PC-9 (cell line): ENCODE measurements at regions of chr11 and their contacts with region 1.

Region 1: DNA sequence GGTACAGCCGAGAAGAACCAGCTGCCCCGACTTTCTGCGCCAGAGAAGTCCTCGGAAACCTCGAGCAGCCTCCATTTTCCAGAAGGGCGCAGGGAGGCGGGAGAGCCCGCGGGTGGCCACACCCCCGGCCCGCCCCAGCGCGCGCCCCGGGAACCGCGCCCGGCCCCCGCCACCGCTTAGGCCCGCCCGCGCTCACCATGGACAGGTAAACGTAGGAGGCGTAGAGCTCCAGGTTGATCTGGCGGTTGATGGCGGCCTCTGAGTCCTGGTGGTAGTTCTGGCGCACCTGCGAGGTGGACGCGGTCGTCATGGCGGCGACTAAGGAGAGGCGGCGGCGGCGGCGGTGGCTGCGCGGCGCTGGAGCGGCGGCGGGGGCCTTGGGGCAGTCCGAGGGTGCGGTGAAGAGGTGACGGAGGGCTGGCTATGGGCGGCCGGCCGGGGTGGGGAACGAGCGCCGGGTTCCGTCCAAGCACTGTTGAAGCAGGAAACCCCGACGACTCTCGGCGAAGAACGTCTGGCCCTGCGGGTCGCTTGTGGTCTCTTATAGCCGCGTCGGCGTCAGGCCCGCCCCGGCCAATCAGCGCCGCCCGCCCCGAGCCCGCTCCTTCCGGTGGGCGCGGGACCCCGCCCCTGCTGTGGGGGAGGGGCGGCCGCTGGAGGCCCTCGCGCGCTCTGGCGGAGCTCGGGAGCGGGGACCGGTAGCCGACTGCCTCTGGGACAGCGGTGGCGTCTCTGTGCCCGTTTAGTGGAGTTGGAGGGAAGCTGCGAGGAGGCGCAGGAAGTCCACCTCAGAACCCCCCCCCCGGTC is at the start of gene FTH1:
- DNase-seq: peak; percentile 79 to 96
- H3K4me3 ChIP-seq: peak within 1 kb of the TSS; percentile 97
- H3K27ac ChIP-seq: peak within 1 kb of the TSS; percentile 99
- H3K4me1 ChIP-seq: peaks cover 63% of the 10 kb centered on the region
- H3K27me3 ChIP-seq: no peaks in the 10 kb centered on the region
- CTCF ChIP-seq: no peak
- total RNA-seq, gene FTH1: 6,804 and 8,986 TPM in 2 replicates

Region 2: DNA sequence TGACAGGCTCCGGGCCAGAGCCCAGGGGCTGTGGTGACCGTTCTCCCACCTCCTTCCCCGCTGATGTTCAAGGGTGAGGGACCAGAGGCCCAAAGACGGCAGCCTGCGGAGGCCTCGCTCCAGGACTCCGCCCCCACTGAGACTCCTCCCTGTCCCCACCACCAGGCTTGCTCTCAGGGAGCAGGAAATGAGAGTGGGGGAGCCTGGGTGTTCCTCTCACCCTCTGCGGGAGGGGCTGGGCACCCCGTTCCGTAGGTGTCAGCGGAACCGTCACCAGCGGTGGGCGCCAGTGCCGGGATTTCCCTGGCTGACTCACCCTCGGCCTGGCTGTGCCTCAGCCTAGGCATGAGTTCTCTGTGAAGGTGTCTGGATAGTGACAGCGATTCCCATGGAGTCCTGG is 271.4 kb before region 1 on chr11:
- CTCF ChIA-PET with region 1: no interaction called
- POLR2A ChIA-PET with region 1: no interaction called
- intact Hi-C with region 1: loop called (anchors 5 kb)
- DNase-seq: peak; percentile 91 to 94
- H3K4me3 ChIP-seq: peak overlapping the region; percentile 34; the same call in 1 of the 2 replicates
- H3K27ac ChIP-seq: peak overlapping the region; percentile 96
- H3K4me1 ChIP-seq: peaks cover 73% of the 10 kb centered on the region
- H3K27me3 ChIP-seq: no peaks in the 10 kb centered on the region
- CTCF ChIP-seq: no peak

Region 3: GRCh38 chr11:61827571-61828378 is 139.5 kb before region 1 on chr11 and contains the start of gene FADS2:
- CTCF ChIA-PET with region 1: no interaction called
- POLR2A ChIA-PET with region 1: interaction called, 12 read pairs
- intact Hi-C with region 1: no loop called
- DNase-seq: peak in 1 of 2 experiments; percentile 92
- H3K4me3 ChIP-seq: no peak within 1 kb of the TSS
- H3K27ac ChIP-seq: no peak within 1 kb of the TSS
- H3K4me1 ChIP-seq: no peaks in the 10 kb centered on the region
- H3K27me3 ChIP-seq: no peaks in the 10 kb centered on the region
- CTCF ChIP-seq: no peak
- total RNA-seq, gene FADS2: 223 and 514 TPM in 2 replicates

Region 4: GRCh38 chr11:61947486-61948210 is 19.7 kb before region 1 on chr11:
- CTCF ChIA-PET with region 1: no interaction called
- POLR2A ChIA-PET with region 1: interaction called, 11 read pairs
- intact Hi-C with region 1: no loop called
- DNase-seq: peak; percentile 61 to 77
- H3K4me3 ChIP-seq: no peak overlapping the region
- H3K27ac ChIP-seq: no peak overlapping the region
- H3K4me1 ChIP-seq: peaks cover 23% of the 10 kb centered on the region
- H3K27me3 ChIP-seq: no peaks in the 10 kb centered on the region
- CTCF ChIP-seq: peak; percentile 95

Region 5: DNA sequence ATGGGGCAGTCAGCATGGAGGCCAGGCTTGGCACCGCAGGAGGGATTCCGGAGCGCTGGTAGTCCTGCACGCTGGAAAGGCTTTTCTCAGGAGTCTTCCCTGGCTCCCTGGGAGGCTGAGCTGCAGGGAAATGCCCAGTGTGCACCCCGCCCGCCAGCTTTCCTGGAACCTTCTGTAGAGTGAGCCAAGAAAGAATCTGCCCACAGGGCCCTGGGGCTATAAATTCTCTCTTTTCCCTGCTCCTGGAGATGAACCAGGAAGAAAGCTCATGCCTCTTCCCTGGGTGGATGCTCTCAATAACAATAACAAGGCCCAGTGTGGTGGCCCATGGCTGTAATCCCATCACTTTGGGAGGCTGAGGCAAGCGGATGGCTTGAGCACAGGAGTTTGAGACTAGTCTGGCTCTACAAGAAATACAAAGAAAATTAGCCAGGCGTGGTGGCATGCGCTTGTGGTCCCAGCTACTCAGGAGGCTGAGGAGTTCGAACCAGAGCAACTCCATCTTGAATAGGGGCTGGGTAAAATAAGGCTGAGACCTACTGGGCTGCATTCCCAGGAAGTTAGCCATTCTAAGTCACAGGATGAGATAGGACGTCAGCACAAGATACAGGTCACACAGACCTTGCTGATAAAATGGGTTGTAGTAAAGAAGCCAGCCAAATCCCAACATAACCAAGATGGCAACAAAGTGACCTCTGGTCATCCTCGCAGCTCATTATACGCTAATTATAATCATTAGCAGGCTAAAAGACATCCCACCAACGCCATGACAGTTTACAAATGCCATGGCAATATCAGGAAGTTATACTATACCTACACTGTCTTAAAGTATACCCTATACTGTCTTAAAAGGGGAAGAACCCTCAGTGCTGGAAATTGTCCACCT is 46.5 kb after region 1 on chr11:
- CTCF ChIA-PET with region 1: interaction called, 5 read pairs
- POLR2A ChIA-PET with region 1: interaction called, 42 read pairs
- intact Hi-C with region 1: loop called (anchors 1 kb)
- DNase-seq: peak; percentile 80 to 83
- H3K4me3 ChIP-seq: peak overlapping the region; percentile 33; the same call in 1 of the 2 replicates
- H3K27ac ChIP-seq: peak overlapping the region; percentile 72
- H3K4me1 ChIP-seq: peaks cover 46% of the 10 kb centered on the region
- H3K27me3 ChIP-seq: no peaks in the 10 kb centered on the region
- CTCF ChIP-seq: no peak

Region 6: DNA sequence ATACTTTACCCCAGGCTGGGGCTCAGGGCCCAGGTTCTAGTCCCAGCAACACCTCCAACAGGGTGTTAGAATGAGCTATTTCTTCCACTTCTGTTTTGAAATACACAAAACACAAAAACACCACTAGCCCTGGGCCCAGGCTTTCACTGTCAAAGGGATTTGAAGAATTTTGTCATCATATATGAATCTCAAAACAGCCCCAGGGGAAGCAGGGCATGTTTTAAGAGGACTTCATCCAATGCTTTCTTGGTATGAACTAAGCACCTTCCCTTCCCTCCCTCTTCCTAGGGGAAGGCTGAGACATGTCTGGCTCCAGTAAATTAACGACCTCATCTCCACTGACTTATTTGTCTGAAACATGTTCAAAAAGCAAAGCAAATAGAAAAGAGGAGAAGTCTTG is 80.7 kb after region 1 on chr11:
- CTCF ChIA-PET with region 1: interaction called, 8 read pairs
- POLR2A ChIA-PET with region 1: interaction called, 13 read pairs
- intact Hi-C with region 1: loop called (anchors 1 kb)
- DNase-seq: peak in 1 of 2 experiments; percentile 68
- H3K4me3 ChIP-seq: no peak overlapping the region
- H3K27ac ChIP-seq: peak overlapping the region; percentile 98
- H3K4me1 ChIP-seq: peaks cover 98% of the 10 kb centered on the region
- H3K27me3 ChIP-seq: no peaks in the 10 kb centered on the region
- CTCF ChIP-seq: no peak

Region 7: GRCh38 chr11:62855571-62856332 is 888.4 kb after region 1 on chr11:
- CTCF ChIA-PET with region 1: no interaction called
- POLR2A ChIA-PET with region 1: no interaction called
- intact Hi-C with region 1: loop called (anchors 5 kb)
- DNase-seq: peak; percentile 98 to 99
- H3K4me3 ChIP-seq: peak overlapping the region; percentile 97
- H3K27ac ChIP-seq: peak overlapping the region; percentile 85
- H3K4me1 ChIP-seq: peaks cover 37% of the 10 kb centered on the region
- H3K27me3 ChIP-seq: no peaks in the 10 kb centered on the region
- CTCF ChIP-seq: no peak